ENCODE measurements at regions of chr12 and their contacts with region 1.

Region 1: DNA sequence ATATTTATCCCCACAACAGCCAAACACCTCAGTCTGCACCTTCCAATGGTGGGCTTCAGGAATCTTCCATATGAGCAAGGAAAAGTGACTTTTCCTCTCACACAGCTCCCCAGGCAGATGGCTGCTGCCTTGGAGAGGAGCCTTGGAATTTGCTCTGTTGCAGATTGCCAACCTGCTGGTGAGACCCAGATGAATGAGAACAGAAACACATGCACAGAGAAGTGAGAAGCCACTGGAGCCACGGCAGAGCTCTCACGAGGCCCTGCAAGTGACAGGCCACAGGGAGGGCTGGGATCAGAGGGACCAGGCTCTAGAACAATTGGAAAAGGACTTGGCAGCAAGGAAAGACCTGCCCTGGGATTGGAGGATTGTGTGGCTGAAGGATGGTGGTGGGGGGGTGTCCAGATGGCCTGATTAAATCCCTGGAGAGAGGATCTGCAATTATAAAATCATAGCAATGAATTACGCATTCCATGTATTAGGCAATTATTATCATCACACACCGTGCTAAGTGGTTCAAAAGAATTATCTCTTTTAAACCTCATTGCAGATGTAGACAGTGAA is 84.9 kb upstream of the PWP1 start:
- DNase-seq: no peak
- H3K4me3 ChIP-seq: no peak overlapping the region
- CTCF ChIP-seq: no peak

Region 2: GRCh38 chr12:107122452-107122958 is 478.2 kb before region 1 on chr12:
- in situ Hi-C with region 1: loop called (anchors 5 kb)
- DNase-seq: no peak
- H3K4me3 ChIP-seq: no peak overlapping the region
- CTCF ChIP-seq: no peak